Naive thymus-derived CD4-positive, alpha-beta T cell (primary cell): ENCODE measurements at regions of chr13 and their contacts with region 1.

Region 1: GRCh38 chr13:52665325-52665724 is 12.7 kb downstream of the SUGT1 start:
- DNase-seq: peak in 2 of 9 donors; percentile 8 to 14
- ATAC-seq: peak; percentile 50
- H3K4me3 ChIP-seq: no peak overlapping the region
- H3K4me3 Mint-ChIP-seq: no peak overlapping the region
- H3K27ac ChIP-seq: peak overlapping the region; percentile 33
- H3K27ac Mint-ChIP-seq: peak overlapping the region in 2 of 9 donors; percentile 9 to 33
- H3K4me1 ChIP-seq: no peaks in the 10 kb centered on the region
- H3K4me1 Mint-ChIP-seq: peaks cover 0 to 13% (median 5%) of the 10 kb centered on the region in 7 donors
- H3K27me3 ChIP-seq: no peaks in the 10 kb centered on the region
- H3K27me3 Mint-ChIP-seq: no peaks in the 10 kb centered on the region

Region 2: GRCh38 chr13:52652196-52652979 is 12.9 kb before region 1 on chr13 and contains the start of gene SUGT1:
- CTCF ChIA-PET with region 1: interaction called, 4 read pairs
- POLR2A ChIA-PET with region 1: interaction called, 12 read pairs
- intact Hi-C with region 1: loop called in 1 of 2 experiments (anchors 1 kb)
- DNase-seq: peak; percentile 90 to 97 (median 95)
- ATAC-seq: peak; percentile 96
- H3K4me3 ChIP-seq: peak within 1 kb of the TSS; percentile 87
- H3K4me3 Mint-ChIP-seq: no peak within 1 kb of the TSS
- H3K27ac ChIP-seq: peak within 1 kb of the TSS; percentile 94
- H3K27ac Mint-ChIP-seq: no peak within 1 kb of the TSS
- H3K4me1 ChIP-seq: peaks cover 17 to 22% of the 10 kb centered on the region in 2 donors
- H3K4me1 Mint-ChIP-seq: peaks cover 6 to 18% (median 13%) of the 10 kb centered on the region in 7 donors
- H3K27me3 ChIP-seq: no peaks in the 10 kb centered on the region
- H3K27me3 Mint-ChIP-seq: no peaks in the 10 kb centered on the region
- total RNA-seq, gene SUGT1: 21.3 to 49.0 (median 33.8) TPM

Region 3: GRCh38 chr13:52707375-52707774 is 42.0 kb after region 1 on chr13:
- CTCF ChIA-PET with region 1: no interaction called
- POLR2A ChIA-PET with region 1: no interaction called
- intact Hi-C with region 1: no loop called
- DNase-seq: no peak
- ATAC-seq: no peak
- H3K4me3 ChIP-seq: no peak overlapping the region
- H3K4me3 Mint-ChIP-seq: no peak overlapping the region
- H3K27ac ChIP-seq: no peak overlapping the region
- H3K27ac Mint-ChIP-seq: no peak overlapping the region
- H3K4me1 ChIP-seq: no peaks in the 10 kb centered on the region
- H3K4me1 Mint-ChIP-seq: no peaks in the 10 kb centered on the region
- H3K27me3 ChIP-seq: no peaks in the 10 kb centered on the region
- H3K27me3 Mint-ChIP-seq: peaks cover 0 to 4% (median 0%) of the 10 kb centered on the region in 5 donors

Region 4: DNA sequence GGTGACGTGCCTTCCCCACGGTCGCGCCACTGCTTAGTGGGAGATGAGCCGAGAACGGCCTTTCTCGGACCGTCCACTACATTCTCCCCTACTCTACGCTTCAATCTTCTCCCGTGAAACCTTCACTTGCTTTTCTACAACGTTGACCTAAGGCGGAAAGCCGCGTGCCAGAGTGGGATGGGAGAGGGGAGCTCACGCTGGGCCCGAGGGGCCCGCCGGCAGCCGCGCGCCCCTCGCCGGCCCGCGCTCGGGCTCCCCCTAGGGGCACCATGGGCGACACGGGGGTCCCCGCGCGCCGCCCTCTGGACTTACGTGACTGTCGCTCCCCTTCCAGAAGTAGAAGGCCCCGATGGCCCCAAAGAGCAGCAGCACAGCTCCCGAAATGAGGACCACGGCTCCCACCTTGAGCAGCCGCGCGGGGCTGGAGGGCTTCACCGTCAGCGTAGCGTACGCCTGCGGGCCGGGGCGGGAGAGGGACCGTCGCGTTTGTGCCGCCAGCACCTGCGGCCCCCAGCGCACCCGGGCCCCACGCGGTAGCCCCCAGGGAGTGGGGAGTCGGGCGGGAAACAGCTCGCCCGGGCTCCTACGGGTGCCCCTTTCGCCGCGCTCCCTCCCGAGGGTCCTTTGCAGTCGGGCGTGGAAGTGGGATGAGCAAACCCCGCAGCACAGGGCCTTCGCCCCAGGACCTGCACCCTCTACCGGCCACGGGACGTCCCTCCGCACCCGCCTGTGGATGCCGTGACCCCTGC is 73.6 kb after region 1 on chr13:
- CTCF ChIA-PET with region 1: no interaction called
- POLR2A ChIA-PET with region 1: interaction called, 4 read pairs
- intact Hi-C with region 1: loop called in 1 of 2 experiments (anchors 5 kb)
- DNase-seq: peak in 4 of 9 donors; percentile 2 to 31 (median 10)
- ATAC-seq: peak; percentile 61
- H3K4me3 ChIP-seq: peak overlapping the region; percentile 6
- H3K4me3 Mint-ChIP-seq: peak overlapping the region; percentile 11 to 78 (median 51)
- H3K27ac ChIP-seq: no peak overlapping the region
- H3K27ac Mint-ChIP-seq: no peak overlapping the region
- H3K4me1 ChIP-seq: no peaks in the 10 kb centered on the region
- H3K4me1 Mint-ChIP-seq: peaks cover 0 to 10% (median 5%) of the 10 kb centered on the region in 7 donors
- H3K27me3 ChIP-seq: peaks cover 0 to 10% of the 10 kb centered on the region in 2 donors
- H3K27me3 Mint-ChIP-seq: peaks cover 53 to 62% (median 58%) of the 10 kb centered on the region in 5 donors

Region 5: GRCh38 chr13:52767949-52768516 is 102.7 kb after region 1 on chr13:
- CTCF ChIA-PET with region 1: no interaction called
- POLR2A ChIA-PET with region 1: no interaction called
- intact Hi-C with region 1: no loop called
- DNase-seq: no peak
- ATAC-seq: no peak
- H3K4me3 ChIP-seq: no peak overlapping the region
- H3K4me3 Mint-ChIP-seq: no peak overlapping the region
- H3K27ac ChIP-seq: no peak overlapping the region
- H3K27ac Mint-ChIP-seq: no peak overlapping the region
- H3K4me1 ChIP-seq: no peaks in the 10 kb centered on the region
- H3K4me1 Mint-ChIP-seq: peaks cover 0 to 2% (median 0%) of the 10 kb centered on the region in 7 donors
- H3K27me3 ChIP-seq: no peaks in the 10 kb centered on the region
- H3K27me3 Mint-ChIP-seq: peaks cover 0 to 19% (median 8%) of the 10 kb centered on the region in 5 donors

Region 6: GRCh38 chr13:52809310-52809769 is 144.0 kb after region 1 on chr13:
- CTCF ChIA-PET with region 1: no interaction called
- POLR2A ChIA-PET with region 1: no interaction called
- intact Hi-C with region 1: loop called in 1 of 2 experiments (anchors 2 kb)
- DNase-seq: peak in 6 of 9 donors; percentile 3 to 38 (median 14)
- ATAC-seq: peak; percentile 67
- H3K4me3 ChIP-seq: no peak overlapping the region
- H3K4me3 Mint-ChIP-seq: no peak overlapping the region
- H3K27ac ChIP-seq: no peak overlapping the region
- H3K27ac Mint-ChIP-seq: no peak overlapping the region
- H3K4me1 ChIP-seq: no peaks in the 10 kb centered on the region
- H3K4me1 Mint-ChIP-seq: peaks cover 0 to 6% (median 0%) of the 10 kb centered on the region in 7 donors
- H3K27me3 ChIP-seq: no peaks in the 10 kb centered on the region
- H3K27me3 Mint-ChIP-seq: peaks cover 13 to 43% (median 24%) of the 10 kb centered on the region in 5 donors

Region 7: GRCh38 chr13:52968074-52968700 is 302.9 kb after region 1 on chr13:
- CTCF ChIA-PET with region 1: interaction called, 3 read pairs
- POLR2A ChIA-PET with region 1: no interaction called
- intact Hi-C with region 1: loop called in 1 of 2 experiments (anchors 1 kb)
- DNase-seq: peak in 8 of 9 donors; percentile 13 to 55 (median 36)
- ATAC-seq: peak; percentile 90
- H3K4me3 ChIP-seq: no peak overlapping the region
- H3K4me3 Mint-ChIP-seq: no peak overlapping the region
- H3K27ac ChIP-seq: no peak overlapping the region
- H3K27ac Mint-ChIP-seq: no peak overlapping the region
- H3K4me1 ChIP-seq: no peaks in the 10 kb centered on the region
- H3K4me1 Mint-ChIP-seq: peaks cover 0 to 4% (median 0%) of the 10 kb centered on the region in 7 donors
- H3K27me3 ChIP-seq: no peaks in the 10 kb centered on the region
- H3K27me3 Mint-ChIP-seq: peaks cover 0 to 8% (median 3%) of the 10 kb centered on the region in 5 donors

Region 8: DNA sequence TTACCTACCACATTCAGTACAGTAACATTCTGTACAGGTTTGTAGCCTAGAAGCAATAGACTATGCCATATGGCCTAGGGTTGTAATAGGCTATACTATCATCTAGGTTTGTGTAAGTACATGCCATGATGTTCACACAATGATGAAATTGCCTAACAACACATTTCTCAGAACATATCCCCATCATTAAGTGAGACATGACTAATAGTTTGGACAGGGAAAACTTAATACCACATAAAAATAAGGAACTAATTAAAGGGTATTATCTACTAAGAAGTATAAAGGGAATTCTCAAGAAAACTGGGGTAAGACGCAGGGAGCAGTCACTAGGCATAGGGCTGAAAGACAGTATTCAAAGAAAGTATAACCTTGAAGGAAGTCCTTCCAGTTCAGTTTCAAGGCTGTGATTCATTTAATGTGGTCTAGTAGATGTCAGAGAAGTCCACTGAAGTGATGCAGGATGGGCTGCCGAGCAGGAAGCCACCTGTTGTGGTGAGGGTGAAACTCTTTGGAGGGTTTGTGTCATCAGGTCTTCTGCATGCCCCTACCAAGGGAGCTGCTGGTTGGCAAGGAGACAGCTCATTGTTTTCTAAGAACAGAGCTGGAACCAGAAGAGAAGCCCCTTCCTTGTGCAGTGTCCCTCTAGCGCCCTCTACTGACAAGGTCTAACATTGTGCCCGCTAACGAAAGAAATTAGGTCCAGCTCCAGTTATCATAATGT is 486.2 kb after region 1 on chr13:
- CTCF ChIA-PET with region 1: no interaction called
- POLR2A ChIA-PET with region 1: no interaction called
- intact Hi-C with region 1: loop called in 1 of 2 experiments (anchors 5 kb)
- DNase-seq: peak in 2 of 9 donors; percentile 1 to 4
- ATAC-seq: peak; percentile 54
- H3K4me3 ChIP-seq: no peak overlapping the region
- H3K4me3 Mint-ChIP-seq: no peak overlapping the region
- H3K27ac ChIP-seq: no peak overlapping the region
- H3K27ac Mint-ChIP-seq: no peak overlapping the region
- H3K4me1 ChIP-seq: no peaks in the 10 kb centered on the region
- H3K4me1 Mint-ChIP-seq: no peaks in the 10 kb centered on the region
- H3K27me3 ChIP-seq: no peaks in the 10 kb centered on the region
- H3K27me3 Mint-ChIP-seq: peaks cover 0 to 24% (median 20%) of the 10 kb centered on the region in 5 donors